Left colon (tissue), 2 donors: ENCODE measurements at regions of chr13 and their contacts with region 1.

Region 1: DNA sequence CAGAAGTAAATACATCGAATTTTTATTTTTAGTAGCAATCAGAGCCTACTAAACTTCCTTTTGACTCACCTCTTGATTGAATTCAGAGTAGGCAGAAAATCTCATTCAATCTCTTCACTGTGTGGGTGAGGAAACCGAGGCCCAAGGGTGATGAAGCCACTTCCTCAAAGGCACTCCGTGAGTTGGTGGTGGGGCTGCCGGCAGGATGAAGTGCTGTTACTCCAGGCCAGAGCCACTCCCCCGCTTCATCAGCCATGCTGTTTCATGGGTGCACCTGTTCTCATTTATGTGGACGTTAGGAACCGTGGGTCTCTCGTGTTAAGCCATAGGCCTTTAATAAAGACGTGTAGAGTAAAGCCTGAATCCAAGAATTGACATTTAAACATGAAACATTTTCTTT is 13.2 kb downstream of the ING1 start:
- DNase-seq: no peak
- ATAC-seq: no peak

Region 2: DNA sequence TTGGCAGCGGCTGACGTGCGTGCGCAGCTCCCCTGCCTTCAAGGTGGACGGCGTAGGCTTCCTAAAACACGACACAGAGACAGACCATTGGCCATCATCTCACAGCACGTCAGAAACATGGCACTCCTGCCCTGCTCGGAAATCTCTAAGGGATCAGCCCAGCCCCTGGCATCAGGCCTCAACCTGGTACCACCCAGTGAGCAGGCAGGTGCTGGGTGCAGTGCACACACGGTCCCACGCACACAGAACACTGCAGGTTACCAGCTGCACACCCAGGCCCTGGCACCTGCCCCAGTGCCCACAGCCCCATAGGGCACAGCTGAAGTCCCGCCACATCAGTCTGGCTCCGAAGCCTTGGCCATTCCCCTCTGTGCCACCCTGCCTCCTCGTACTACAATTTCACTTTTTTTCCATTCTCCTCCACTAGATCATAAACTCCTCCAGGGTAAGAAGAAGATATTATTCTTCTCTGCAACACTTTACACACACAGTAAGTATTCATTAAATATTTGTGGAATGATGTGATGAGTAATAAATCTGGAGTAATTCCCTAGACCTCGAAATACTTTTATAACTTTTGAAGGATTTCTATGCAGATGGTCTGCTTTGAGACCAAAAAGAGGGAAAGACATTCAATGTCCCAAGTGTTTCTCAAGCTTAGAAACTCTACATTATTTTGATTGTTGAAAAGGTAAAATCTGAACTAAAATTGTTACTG is 576.2 kb before region 1 on chr13:
- intact Hi-C with region 1: no loop called
- DNase-seq: no peak
- ATAC-seq: no peak

Region 3: GRCh38 chr13:110799246-110800236 is 72.8 kb after region 1 on chr13:
- intact Hi-C with region 1: loop called in 1 of 2 experiments (anchors 10 kb)
- DNase-seq: no peak
- ATAC-seq: no peak

Region 4: GRCh38 chr13:110869805-110870706 is 143.3 kb after region 1 on chr13:
- intact Hi-C with region 1: no loop called
- DNase-seq: peak; percentile 60 to 82
- ATAC-seq: peak; percentile 64

Region 5: GRCh38 chr13:110907951-110908898 is 181.5 kb after region 1 on chr13:
- intact Hi-C with region 1: loop called in 1 of 2 experiments (anchors 10 kb)
- DNase-seq: peak; percentile 68 to 78
- ATAC-seq: peak; percentile 75